ENCODE measurements at regions of chr17 and their contacts with region 1.

Region 1: DNA sequence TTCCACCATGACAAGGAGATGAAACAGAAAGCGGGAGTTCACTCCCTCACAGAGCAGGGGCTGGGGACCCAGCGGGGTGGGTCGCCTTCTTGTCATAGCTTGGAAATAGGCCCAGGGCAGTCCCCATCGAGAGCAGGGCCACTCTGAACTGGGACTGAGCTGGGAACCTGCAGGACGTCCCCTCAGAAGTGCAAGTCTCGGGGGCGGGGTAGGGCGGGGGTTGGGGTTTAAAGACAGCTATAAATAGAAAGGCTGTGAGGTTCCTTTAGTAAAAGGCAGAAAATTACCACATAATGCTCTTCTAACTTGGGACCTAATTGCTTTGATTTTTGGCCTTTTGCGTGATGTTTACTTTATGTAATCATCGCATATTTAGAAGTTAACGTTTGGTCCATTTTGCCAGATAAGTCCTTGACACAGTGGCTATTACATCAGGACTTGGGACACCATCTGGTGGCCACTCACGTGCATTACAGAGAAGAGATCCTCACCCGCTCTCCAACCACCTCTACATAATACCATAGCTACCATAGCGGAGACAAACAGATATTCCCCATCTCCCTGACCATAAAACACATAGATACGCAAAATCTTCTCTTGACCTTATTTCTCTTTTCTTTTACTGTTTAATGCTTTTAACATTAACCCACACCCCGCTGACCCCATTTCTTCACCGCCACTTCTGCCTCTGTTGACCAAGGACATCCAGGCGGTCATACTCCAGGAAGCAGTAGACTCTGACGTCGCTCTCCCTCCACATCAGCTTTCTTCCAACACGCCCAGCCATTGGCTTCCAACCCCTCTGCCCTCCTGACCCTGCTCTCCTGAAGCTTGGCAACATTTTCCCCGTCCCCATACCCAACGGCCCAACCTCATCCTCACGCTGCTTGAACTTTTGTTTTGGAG is 27.5 kb upstream of the PIK3R6 start:
- DNase-seq: peak; percentile 55 to 65 (median 64)
- ATAC-seq: peak; percentile 93
- H3K4me3 ChIP-seq: no peak overlapping the region
- H3K27ac ChIP-seq: no peak overlapping the region
- H3K4me1 ChIP-seq: no peaks in the 10 kb centered on the region; a peak in 2 of 5 replicates
- H3K27me3 ChIP-seq: peaks cover 2 to 19% of the 10 kb centered on the region in 2 experiments; a peak in 2 of 5 replicates
- CTCF ChIP-seq: peak; percentile 61 to 71 (median 68)
- EP300 ChIP-seq: no peak
- POLR2A ChIP-seq: no peak
- RAD21 ChIP-seq: peak; percentile 59 to 68

Region 2: GRCh38 chr17:8798846-8799569 is 95.9 kb before region 1 on chr17 and contains the start of gene MFSD6L:
- CTCF ChIA-PET with region 1: interaction called, 3 read pairs
- POLR2A ChIA-PET with region 1: no interaction called
- in situ Hi-C with region 1: loop called (anchors 5 kb)
- intact Hi-C with region 1: no loop called
- DNase-seq: no peak
- ATAC-seq: no peak
- H3K4me3 ChIP-seq: no peak within 1 kb of the TSS
- H3K27ac ChIP-seq: no peak within 1 kb of the TSS
- H3K4me1 ChIP-seq: peaks cover 0 to 8% of the 10 kb centered on the region in 2 experiments; a peak in 2 of 5 replicates
- H3K27me3 ChIP-seq: peaks cover 0 to 39% of the 10 kb centered on the region in 2 experiments; a peak in 4 of 5 replicates
- CTCF ChIP-seq: no peak
- EP300 ChIP-seq: no peak
- POLR2A ChIP-seq: no peak
- RAD21 ChIP-seq: no peak
- polyA plus RNA-seq, gene MFSD6L: not detected

Region 3: DNA sequence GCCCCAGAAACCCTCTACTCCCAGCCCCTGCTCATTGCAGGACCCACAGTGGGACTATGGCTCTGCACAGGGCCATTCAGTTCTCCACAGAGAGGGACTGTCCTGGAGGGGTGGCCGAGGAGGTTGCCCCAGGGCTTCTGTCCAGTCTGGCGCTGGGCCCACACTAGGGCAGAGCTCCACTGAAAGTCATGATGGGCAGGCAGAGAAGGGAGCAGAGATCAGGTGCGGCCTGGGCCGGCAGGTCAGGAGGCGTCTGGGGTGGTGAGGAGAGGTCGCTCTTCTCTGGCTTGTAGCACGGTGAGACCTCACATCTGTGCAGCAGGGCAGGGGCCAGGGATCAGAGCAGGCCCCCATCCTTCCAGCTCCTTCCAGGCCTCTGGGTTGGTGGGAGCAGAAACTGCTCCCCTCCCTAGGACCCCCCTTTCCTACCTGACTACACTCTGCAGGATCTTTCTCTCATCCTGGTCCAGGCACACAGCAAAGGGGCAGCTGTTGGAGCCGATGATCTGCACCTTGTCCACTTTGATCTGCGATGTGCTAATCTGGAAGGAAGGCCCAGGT is 14.4 kb before region 1 on chr17:
- CTCF ChIA-PET with region 1: no interaction called
- POLR2A ChIA-PET with region 1: no interaction called
- in situ Hi-C with region 1: no loop called
- intact Hi-C with region 1: no loop called
- DNase-seq: no peak
- ATAC-seq: no peak
- H3K4me3 ChIP-seq: no peak overlapping the region
- H3K27ac ChIP-seq: no peak overlapping the region
- H3K4me1 ChIP-seq: peaks cover 0 to 4% of the 10 kb centered on the region in 2 experiments; a peak in 2 of 5 replicates
- H3K27me3 ChIP-seq: peaks cover 0 to 15% of the 10 kb centered on the region in 2 experiments; a peak in 3 of 5 replicates
- CTCF ChIP-seq: no peak
- EP300 ChIP-seq: no peak
- POLR2A ChIP-seq: no peak
- RAD21 ChIP-seq: no peak

Measured in K562 (cell line).